Dorsolateral prefrontal cortex (tissue), 120 donors: ENCODE measurements at regions of chr13 and their contacts with region 1.

Region 1: GRCh38 chr13:30465585-30466357 is at the start of gene HMGB1:
- DNase-seq: peak; percentile 99 to 100 (median 100)
- H3K4me3 ChIP-seq: peak within 1 kb of the TSS; percentile 50 to 94 (median 79)
- H3K27ac ChIP-seq: peak within 1 kb of the TSS; percentile 61 to 100 (median 98)
- H3K27me3 ChIP-seq: no peaks in the 10 kb centered on the region
- CTCF ChIP-seq: peak in 10 of 56 donors; percentile 8 to 34 (median 20)
- total RNA-seq, gene HMGB1: 153 to 327 (median 228) TPM

Region 2: DNA sequence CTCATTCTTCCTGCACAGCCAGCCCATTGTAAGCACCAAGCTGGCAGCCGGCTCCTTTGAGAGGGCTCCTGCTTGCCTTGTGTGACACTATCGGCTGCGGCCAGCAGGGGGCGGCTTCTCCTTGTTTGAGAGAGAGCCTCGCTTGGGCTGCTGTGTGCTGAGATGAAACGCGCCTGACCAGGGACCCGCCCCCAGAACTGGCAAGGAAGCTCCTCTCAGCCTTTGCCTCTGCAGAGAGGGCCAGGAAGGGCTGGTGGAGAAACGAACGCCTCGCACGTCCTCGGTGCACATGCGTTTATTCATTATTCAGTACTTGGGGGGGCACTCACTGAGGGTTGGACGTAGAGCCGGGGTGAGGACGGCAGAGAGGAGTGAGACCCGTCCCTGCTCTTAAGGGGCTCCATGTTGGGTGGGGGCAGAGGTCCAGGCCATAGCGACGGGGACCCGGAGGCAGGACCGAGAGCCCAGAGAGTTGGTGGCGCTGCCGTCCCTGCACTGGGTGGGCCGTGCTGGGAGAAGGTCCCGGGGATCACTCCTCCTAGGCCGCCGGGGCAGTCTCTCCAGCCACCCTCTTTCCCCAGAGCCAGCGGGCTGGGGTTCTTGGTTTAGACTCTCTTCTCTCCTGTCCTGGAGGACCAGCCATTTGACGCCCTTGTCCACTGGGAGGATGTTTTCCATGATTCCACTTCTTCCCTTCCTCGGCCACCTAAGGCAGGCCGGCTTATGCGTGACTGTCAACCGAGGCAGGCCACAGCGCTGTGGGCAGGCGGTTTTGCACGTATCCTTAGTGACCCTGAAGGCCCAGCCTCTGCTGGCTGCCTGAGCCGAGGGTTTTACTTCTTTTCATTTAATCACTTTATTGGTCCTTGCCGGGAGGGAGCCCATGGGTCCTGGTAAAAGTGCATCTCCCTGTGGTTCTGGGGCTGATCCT is 332.9 kb before region 1 on chr13:
- intact Hi-C with region 1: loop called (anchors 2 kb)
- DNase-seq: peak; percentile 96 to 100 (median 98)
- H3K4me3 ChIP-seq: peak overlapping the region in 42 of 59 donors; percentile 3 to 51 (median 28)
- H3K27ac ChIP-seq: peak overlapping the region in 19 of 59 donors; percentile 1 to 81 (median 44)
- H3K27me3 ChIP-seq: no peaks in the 10 kb centered on the region
- CTCF ChIP-seq: peak; percentile 82 to 99 (median 97)

Region 3: GRCh38 chr13:30408319-30409101 is 57.3 kb before region 1 on chr13:
- intact Hi-C with region 1: loop called (anchors 5 kb)
- DNase-seq: peak; percentile 85 to 92 (median 90)
- H3K4me3 ChIP-seq: peak overlapping the region; percentile 27 to 71 (median 56)
- H3K27ac ChIP-seq: peak overlapping the region; percentile 1 to 93 (median 82)
- H3K27me3 ChIP-seq: no peaks in the 10 kb centered on the region
- CTCF ChIP-seq: peak; percentile 44 to 91 (median 77)

Region 4: GRCh38 chr13:30617315-30618185 is 151.8 kb after region 1 on chr13 and contains the start of gene USPL1:
- intact Hi-C with region 1: loop called (anchors 1 kb)
- DNase-seq: peak; percentile 95 to 98 (median 96)
- H3K4me3 ChIP-seq: peak within 1 kb of the TSS; percentile 67 to 99 (median 88)
- H3K27ac ChIP-seq: peak within 1 kb of the TSS; percentile 97 to 100 (median 100)
- H3K27me3 ChIP-seq: no peaks in the 10 kb centered on the region
- CTCF ChIP-seq: peak in 48 of 56 donors; percentile 11 to 63 (median 42)
- total RNA-seq, gene USPL1: 14.6 to 43.5 (median 21.5) TPM

Region 5: DNA sequence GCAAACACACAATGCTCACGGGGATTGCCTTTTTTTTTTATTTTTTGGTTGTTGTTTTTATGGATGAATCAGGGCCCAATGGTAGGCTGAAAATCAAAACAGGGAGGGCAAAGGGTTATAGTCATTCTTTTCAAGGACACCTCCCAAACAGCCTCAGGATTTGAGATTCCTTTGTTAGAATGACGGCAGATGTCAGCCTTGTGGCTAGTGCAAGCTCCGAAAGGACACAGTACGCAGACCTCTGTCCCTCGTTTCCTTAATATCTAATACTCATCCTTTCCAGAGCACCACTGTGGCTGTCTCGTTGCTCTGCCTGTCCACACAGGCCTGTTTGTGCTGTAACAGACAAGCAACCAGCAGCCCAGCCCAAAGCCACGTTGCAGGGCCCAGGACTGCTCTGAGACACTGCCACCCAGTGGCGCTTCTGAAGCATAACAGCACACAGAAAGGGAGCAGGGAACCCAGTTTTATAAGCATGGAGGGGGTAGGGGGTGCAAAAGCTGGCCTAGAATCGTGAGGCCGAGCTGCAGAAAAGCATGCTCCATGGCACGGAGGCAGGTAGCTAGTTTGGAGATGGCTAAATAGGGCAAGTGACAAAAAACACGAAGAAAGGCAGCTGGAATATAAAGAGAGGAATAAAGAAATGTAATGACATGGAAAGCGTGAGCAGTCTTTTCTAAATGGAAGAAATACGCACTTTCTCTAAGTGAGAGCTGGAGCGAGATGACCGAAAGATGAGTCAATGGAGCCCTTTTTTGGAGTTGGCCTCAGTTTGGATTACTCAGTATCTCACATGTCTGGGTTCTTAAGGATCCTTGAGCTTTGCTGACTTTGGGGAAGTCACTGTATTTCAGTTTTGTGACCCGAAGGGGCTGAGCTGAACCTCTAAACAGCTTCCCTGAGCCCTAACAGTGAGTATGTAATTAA is 399.6 kb after region 1 on chr13:
- intact Hi-C with region 1: loop called in 1 of 2 experiments (anchors 5 kb)
- DNase-seq: peak; percentile 57 to 88 (median 84)
- H3K4me3 ChIP-seq: peak overlapping the region in 5 of 59 donors; percentile 2 to 15 (median 5)
- H3K27ac ChIP-seq: peak overlapping the region in 56 of 59 donors; percentile 6 to 91 (median 76)
- H3K27me3 ChIP-seq: no peaks in the 10 kb centered on the region
- CTCF ChIP-seq: peak; percentile 76 to 96 (median 90)